Dendritic cell treated with granulocyte-macrophage colony-stimulating factor and Interleukin-4, amounts not matched to agents 40 ng/mL and 50 ng/mL, for 4 days (primary cell): ENCODE measurements at regions of chr3 and their contacts with region 1.

Region 1: GRCh38 chr3:50572158-50572557 is 2.8 kb downstream of the HEMK1 start:
- H3K4me3 Mint-ChIP-seq: peak overlapping the region; percentile 26
- H3K27ac Mint-ChIP-seq: peak overlapping the region; percentile 97
- H3K4me1 Mint-ChIP-seq: peaks cover 80% of the 10 kb centered on the region
- H3K27me3 Mint-ChIP-seq: no peaks in the 10 kb centered on the region

Region 2: GRCh38 chr3:50519471-50520089 is 52.6 kb before region 1 on chr3:
- intact Hi-C with region 1: no loop called
- H3K4me3 Mint-ChIP-seq: no peak overlapping the region
- H3K27ac Mint-ChIP-seq: no peak overlapping the region
- H3K4me1 Mint-ChIP-seq: peaks cover 59% of the 10 kb centered on the region
- H3K27me3 Mint-ChIP-seq: peaks cover 39% of the 10 kb centered on the region

Region 3: DNA sequence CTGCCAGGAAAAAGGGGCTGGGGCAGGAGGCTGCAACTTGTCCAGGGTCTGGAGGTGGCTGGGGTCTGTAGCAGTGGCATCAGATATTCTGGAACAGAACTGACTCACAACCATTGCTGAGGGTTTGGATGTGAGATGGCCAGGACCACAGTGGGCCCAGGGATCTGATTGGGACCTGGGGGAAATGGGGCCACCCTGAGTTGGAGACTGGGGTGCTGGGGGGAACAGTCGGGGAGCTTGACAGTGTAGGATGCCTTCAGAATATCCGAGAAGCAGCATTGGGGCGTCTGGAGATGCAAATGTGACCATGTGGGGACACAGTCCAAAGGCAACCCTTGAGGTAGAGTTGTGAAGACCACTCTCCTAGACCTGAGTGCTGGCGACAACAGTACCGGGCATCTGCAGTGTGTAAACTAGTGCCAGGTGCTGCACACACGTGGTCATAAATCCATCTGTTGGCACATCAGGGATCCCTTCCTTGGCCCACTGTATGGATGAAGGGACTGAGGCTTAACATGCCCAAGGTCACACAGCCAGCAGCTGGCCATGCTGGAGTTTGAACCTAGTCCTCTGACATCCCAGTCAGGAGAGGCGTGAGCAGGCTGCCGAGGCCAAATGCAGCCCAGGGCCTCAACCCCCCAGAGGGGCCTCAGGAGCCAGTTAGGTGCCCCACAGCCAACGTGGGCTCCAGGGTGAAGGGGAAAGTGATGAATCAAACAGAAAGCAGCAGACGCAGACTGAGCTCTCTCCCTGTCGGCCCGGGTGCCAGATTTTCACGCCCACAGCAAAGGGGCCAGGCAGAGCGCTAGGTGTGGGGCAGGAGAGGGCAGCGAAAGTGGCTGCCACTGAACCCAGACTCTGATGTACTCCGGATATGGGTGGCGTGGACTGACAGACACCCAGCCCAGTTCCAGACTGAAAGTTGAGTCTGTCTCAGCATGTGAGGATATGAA is 15.9 kb after region 1 on chr3:
- intact Hi-C with region 1: loop called (anchors 2 kb)
- H3K4me3 Mint-ChIP-seq: peak overlapping the region; percentile 35
- H3K27ac Mint-ChIP-seq: peak overlapping the region; percentile 98
- H3K4me1 Mint-ChIP-seq: peaks cover 96% of the 10 kb centered on the region
- H3K27me3 Mint-ChIP-seq: no peaks in the 10 kb centered on the region

Region 4: DNA sequence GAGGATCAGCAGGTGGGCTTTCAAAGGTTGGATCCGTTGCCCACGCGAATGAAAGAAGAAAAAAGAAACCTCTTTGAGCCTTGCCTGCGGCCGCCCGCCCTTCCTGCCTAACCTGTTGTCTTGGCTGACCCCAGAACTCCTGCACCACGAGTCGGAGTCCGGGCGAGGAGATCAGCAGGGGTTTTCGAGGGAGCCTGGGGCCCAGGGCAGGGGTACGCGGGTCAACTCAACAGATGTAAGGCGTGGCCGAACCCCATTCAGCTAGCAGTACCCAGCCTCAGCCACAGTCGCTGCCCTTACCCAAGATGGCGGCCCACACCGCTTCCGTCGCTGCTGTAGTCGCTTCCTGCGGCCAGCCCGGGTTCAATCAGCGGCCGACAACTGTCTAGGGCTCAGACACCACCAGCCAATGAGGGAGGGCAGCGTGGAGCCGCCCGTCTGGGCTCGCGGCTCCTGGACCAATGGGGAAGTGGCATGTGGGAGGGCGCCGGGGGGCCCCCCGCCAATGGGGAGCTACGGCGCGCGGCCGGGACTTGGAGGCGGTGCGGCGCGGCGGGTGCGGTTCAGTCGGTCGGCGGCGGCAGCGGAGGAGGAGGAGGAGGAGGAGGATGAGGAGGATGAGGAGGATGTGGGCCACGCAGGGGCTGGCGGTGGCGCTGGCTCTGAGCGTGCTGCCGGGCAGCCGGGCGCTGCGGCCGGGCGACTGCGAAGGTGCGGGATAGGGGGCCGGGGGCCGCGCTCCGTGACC is 812.7 kb after region 1 on chr3 and contains the start of gene MANF:
- intact Hi-C with region 1: loop called (anchors 5 kb)
- H3K4me3 Mint-ChIP-seq: peak within 1 kb of the TSS; percentile 93
- H3K27ac Mint-ChIP-seq: peak within 1 kb of the TSS; percentile 99
- H3K4me1 Mint-ChIP-seq: peaks cover 60% of the 10 kb centered on the region
- H3K27me3 Mint-ChIP-seq: no peaks in the 10 kb centered on the region